Breast epithelium (tissue), 4 donors: ENCODE measurements at regions of chr11 and their contacts with region 1.

Region 1: GRCh38 chr11:34960277-34960676 is 43.9 kb downstream of the PDHX start:
- DNase-seq: peak; percentile 58 to 63
- H3K4me3 ChIP-seq: no peak overlapping the region
- H3K27ac ChIP-seq: peak overlapping the region in 1 of 2 donors; percentile 2
- H3K4me1 ChIP-seq: no peaks in the 10 kb centered on the region
- H3K27me3 ChIP-seq: no peaks in the 10 kb centered on the region
- CTCF ChIP-seq: no peak
- POLR2A ChIP-seq: no peak

Region 2: DNA sequence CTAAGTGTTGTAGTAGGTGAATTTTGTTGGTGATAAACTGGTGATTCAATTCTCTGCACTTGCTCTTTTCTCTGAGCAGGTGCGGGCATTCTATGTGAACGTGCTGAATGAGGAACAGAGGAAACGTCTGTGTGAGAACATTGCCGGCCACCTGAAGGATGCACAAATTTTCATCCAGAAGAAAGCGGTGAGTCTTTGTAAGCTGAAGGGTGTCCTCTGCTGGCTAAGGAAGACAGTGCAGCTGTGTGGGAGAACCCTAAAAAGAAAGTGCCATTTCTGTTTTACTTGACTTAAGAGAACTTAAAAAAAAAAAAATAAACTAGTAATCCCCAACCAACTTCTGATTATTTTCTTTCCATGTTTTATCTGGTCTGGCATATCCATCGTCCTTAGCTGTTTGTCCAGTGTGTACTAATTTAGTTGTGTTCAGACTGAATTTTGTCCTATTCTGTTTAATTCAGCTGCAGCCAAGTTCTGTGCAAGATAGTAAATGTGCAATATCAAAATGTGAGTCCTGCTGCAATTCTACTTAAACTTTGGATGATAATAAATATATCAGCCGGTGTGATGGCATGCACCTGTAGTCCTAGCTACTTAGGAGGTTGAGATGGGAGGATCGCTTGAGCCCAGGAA is 492.0 kb before region 1 on chr11:
- intact Hi-C with region 1: loop called (anchors 10 kb)
- DNase-seq: no peak
- H3K4me3 ChIP-seq: no peak overlapping the region
- H3K27ac ChIP-seq: no peak overlapping the region
- H3K4me1 ChIP-seq: no peaks in the 10 kb centered on the region
- H3K27me3 ChIP-seq: no peaks in the 10 kb centered on the region
- CTCF ChIP-seq: peak in 2 of 3 donors; percentile 27 to 33
- POLR2A ChIP-seq: no peak